Activated naive CD4-positive, alpha-beta T cell treated with anti-CD3 and anti-CD28 coated beads for 36 hours (primary cell): ENCODE measurements at regions of chr4 and their contacts with region 1.

Region 1: GRCh38 chr4:1899149-1900086 is 28.2 kb downstream of the NSD2 start:
- DNase-seq: peak; percentile 84
- H3K4me3 Mint-ChIP-seq: no peak overlapping the region
- H3K27ac Mint-ChIP-seq: no peak overlapping the region
- H3K4me1 Mint-ChIP-seq: peaks cover 18% of the 10 kb centered on the region
- H3K27me3 Mint-ChIP-seq: no peaks in the 10 kb centered on the region

Region 2: DNA sequence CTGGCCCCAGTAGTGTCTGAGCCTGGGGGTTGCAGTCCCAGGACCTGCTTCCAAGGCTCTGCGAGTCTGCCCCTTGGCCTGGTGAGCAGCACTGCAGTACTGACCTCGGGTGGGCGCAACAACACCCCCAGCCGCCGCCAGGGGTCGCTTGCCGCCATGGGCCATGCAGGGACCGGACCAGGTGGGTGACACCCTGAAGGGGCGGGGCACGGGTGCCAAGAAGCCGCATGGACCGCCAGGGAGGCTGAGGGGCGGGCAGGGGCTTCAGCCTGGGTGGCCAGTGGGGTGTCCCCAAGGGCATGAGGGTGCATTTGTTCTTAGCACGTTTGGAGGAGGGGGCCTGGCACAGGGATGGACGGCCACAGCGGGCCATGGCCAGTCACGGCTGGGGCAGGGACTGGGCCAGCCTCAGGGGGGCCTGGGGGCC is 153.1 kb before region 1 on chr4:
- CTCF ChIA-PET with region 1: interaction called, 7 read pairs
- intact Hi-C with region 1: loop called (anchors 1 kb)
- DNase-seq: peak; percentile 81
- H3K4me3 Mint-ChIP-seq: no peak overlapping the region
- H3K27ac Mint-ChIP-seq: no peak overlapping the region
- H3K4me1 Mint-ChIP-seq: no peaks in the 10 kb centered on the region
- H3K27me3 Mint-ChIP-seq: no peaks in the 10 kb centered on the region

Region 3: DNA sequence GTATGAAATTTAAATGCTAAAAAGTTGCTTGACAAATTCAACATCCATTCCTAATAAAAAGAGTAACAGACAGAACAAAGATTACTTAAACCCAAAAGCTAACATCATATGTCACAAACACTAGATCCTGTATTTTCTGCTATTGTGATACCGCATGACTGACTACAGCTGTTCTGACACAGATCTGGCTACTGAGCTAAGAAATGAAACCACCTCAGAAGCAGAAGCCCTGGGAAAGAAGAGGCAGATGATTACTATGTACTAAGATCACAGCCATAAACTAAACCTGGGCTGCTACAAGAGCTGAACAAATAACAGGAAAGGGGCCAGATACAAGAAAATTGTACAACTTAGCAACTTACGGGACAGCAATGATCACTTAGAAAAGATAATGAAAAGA is 52.8 kb before region 1 on chr4:
- CTCF ChIA-PET with region 1: interaction called, 15 read pairs
- intact Hi-C with region 1: no loop called
- DNase-seq: no peak
- H3K4me3 Mint-ChIP-seq: no peak overlapping the region
- H3K27ac Mint-ChIP-seq: no peak overlapping the region
- H3K4me1 Mint-ChIP-seq: peaks cover 12% of the 10 kb centered on the region
- H3K27me3 Mint-ChIP-seq: no peaks in the 10 kb centered on the region

Region 4: GRCh38 chr4:1862055-1862926 is 37.1 kb before region 1 on chr4:
- CTCF ChIA-PET with region 1: interaction called, 27 read pairs
- intact Hi-C with region 1: no loop called
- DNase-seq: no peak
- H3K4me3 Mint-ChIP-seq: peak overlapping the region; percentile 58
- H3K27ac Mint-ChIP-seq: no peak overlapping the region
- H3K4me1 Mint-ChIP-seq: peaks cover 23% of the 10 kb centered on the region
- H3K27me3 Mint-ChIP-seq: no peaks in the 10 kb centered on the region

Region 5: DNA sequence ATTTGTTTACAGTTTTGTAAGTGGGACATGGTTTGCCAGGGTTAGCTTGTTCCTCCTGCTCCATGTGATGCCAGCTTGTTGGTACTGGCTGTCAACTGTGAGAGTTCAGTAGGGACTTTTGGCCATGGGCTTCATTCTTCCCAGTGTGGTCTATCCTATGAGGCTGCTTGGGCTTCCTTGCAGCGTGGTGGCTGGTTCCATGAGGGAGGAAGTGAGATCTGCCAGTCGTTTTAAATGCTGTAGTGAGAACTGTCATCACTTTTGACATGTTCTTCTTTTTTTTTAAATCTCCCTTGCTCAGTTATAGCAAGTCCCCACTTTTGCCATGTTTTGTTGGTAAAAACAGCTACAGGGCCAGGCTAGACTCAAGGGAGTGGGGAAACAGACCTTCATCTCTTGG is 12.4 kb before region 1 on chr4:
- CTCF ChIA-PET with region 1: interaction called, 23 read pairs
- intact Hi-C with region 1: no loop called
- DNase-seq: no peak
- H3K4me3 Mint-ChIP-seq: no peak overlapping the region
- H3K27ac Mint-ChIP-seq: no peak overlapping the region
- H3K4me1 Mint-ChIP-seq: peaks cover 22% of the 10 kb centered on the region
- H3K27me3 Mint-ChIP-seq: no peaks in the 10 kb centered on the region